ENCODE measurements at regions of chr15 and their contacts with region 1.

Region 1: GRCh38 chr15:64010719-64011118 is 35.6 kb downstream of the DAPK2 start:
- DNase-seq: peak; percentile 61
- ATAC-seq: peak; percentile 97
- H3K4me3 Mint-ChIP-seq: peak overlapping the region; percentile 69
- H3K27ac Mint-ChIP-seq: peak overlapping the region; percentile 89
- H3K4me1 Mint-ChIP-seq: peaks cover 32% of the 10 kb centered on the region
- H3K27me3 Mint-ChIP-seq: no peaks in the 10 kb centered on the region
- CTCF ChIP-seq: no peak

Region 2: DNA sequence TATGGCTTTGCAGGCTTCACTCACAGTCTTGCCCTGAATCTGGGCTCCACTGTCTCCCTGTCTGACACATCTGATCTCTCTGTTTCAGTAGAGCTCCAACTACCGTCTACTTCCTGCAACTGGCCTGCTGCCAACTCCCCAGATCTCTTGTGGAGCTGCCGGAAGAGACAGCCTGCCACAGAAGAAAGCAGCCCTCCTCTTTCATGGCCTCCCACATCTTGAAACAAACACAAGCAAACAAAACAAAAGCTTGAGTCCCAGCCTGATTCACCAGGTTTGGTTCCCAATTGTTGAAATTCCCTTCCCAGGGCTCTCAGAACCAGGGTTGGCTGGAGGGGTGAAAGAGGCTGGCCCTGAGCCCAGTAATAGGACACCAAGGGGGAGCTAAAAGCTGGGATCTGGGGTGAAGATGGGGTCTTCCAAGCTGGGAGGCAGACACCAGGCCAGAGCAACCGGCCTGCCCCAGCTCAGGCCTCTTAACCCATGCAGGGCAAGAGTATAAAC is 573.8 kb before region 1 on chr15:
- CTCF ChIA-PET with region 1: no interaction called
- POLR2A ChIA-PET with region 1: no interaction called
- intact Hi-C with region 1: no loop called
- DNase-seq: no peak
- ATAC-seq: no peak
- H3K4me3 Mint-ChIP-seq: no peak overlapping the region
- H3K27ac Mint-ChIP-seq: no peak overlapping the region
- H3K4me1 Mint-ChIP-seq: peaks cover 2% of the 10 kb centered on the region
- H3K27me3 Mint-ChIP-seq: peaks cover 5% of the 10 kb centered on the region
- CTCF ChIP-seq: no peak

Region 3: DNA sequence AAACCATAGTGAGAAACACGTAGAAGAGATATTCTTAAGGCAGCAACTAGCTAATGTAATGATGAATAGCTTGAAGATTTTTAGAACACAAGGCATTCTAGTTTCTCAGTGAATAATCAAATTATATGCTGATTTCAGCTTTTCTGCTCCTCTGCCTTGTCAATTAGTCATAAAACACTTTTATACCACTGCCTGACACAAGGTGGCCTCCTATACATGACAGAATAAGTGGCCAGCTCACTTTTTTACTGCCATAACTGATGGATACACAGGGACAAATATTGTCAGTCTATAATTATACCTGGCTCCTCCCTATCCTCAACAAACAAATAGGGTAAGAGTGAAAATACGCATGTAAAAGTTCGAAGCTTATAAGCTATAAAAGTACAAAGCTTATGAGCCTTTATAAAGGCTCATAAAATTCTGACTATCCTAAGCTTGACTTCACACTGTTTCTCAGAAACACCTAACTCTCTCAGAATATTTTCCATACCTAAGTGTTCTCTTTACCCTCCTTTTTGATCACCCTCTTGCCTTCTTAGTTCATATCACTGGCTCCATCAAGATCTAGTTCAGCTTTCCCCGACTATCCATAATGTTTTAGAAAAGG is 258.5 kb before region 1 on chr15:
- CTCF ChIA-PET with region 1: interaction called, 59 read pairs
- POLR2A ChIA-PET with region 1: interaction called, 9 read pairs
- intact Hi-C with region 1: loop called (anchors 1 kb)
- DNase-seq: no peak
- ATAC-seq: peak; percentile 83
- H3K4me3 Mint-ChIP-seq: no peak overlapping the region
- H3K27ac Mint-ChIP-seq: peak overlapping the region; percentile 59
- H3K4me1 Mint-ChIP-seq: peaks cover 3% of the 10 kb centered on the region
- H3K27me3 Mint-ChIP-seq: no peaks in the 10 kb centered on the region
- CTCF ChIP-seq: no peak

Region 4: DNA sequence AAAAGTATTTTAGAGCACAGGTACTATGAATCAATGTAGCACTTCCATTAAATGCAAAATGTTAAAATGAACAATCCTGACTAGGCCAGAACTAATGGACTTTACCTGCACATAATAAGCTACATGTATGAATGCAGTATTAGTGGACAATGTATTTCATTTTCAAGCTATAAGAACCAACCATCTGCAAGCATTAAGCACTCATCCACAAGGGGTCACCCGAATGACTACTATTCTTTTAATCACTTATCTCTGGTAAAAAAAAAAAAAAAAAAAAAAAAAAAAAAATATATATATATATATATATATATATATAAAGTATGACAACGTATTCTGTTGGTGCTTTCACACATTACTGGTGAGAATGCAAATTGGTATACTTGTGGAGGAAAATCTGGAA is 184.2 kb before region 1 on chr15:
- CTCF ChIA-PET with region 1: interaction called, 13 read pairs
- POLR2A ChIA-PET with region 1: interaction called, 3 read pairs
- intact Hi-C with region 1: loop called (anchors 2 kb)
- DNase-seq: no peak
- ATAC-seq: peak; percentile 49
- H3K4me3 Mint-ChIP-seq: no peak overlapping the region
- H3K27ac Mint-ChIP-seq: no peak overlapping the region
- H3K4me1 Mint-ChIP-seq: peaks cover 63% of the 10 kb centered on the region
- H3K27me3 Mint-ChIP-seq: no peaks in the 10 kb centered on the region
- CTCF ChIP-seq: no peak

Region 5: GRCh38 chr15:63909819-63910437 is 100.8 kb before region 1 on chr15:
- CTCF ChIA-PET with region 1: no interaction called
- POLR2A ChIA-PET with region 1: no interaction called
- intact Hi-C with region 1: no loop called
- DNase-seq: no peak
- ATAC-seq: no peak
- H3K4me3 Mint-ChIP-seq: no peak overlapping the region
- H3K27ac Mint-ChIP-seq: no peak overlapping the region
- H3K4me1 Mint-ChIP-seq: peaks cover 15% of the 10 kb centered on the region
- H3K27me3 Mint-ChIP-seq: no peaks in the 10 kb centered on the region
- CTCF ChIP-seq: no peak

Region 6: DNA sequence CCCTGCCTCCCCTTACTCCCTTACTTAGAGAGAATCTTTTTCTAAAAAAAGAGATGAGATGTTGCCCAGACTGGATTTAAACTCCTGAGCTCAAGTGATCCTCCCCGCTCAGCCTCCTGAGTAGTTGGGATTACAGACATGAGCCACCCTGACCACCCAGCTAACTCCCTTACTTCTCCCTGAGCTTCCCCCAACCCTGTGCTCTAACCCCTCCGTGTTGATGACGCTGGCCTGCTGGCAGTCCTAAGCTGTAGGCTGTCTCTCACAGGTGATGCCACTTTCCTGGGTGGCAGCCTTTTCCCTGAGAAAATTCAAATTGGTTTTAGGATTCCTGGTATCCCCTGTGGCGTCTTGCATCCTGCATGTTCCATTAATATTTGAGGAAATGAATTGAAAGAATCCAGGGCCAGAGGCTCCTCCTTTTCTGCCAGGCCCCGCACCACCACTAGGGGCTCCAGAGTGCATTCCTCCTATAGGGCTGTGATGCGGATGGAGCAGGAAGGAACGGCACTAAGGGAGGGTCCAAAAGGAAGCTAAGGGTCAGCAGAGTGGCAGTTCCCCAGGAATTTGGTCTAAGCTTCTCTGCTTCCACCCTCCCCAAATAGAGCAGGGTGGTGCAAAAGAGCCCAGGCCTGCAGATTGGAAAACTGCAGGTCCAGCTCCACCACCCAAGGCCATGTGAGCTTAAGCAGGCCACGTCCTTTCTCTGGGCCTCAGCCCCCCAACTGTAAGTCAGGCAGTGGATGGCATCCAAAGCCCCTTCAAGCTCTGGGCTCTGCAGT is 65.5 kb before region 1 on chr15:
- CTCF ChIA-PET with region 1: interaction called, 20 read pairs
- POLR2A ChIA-PET with region 1: no interaction called
- intact Hi-C with region 1: loop called (anchors 1 kb)
- DNase-seq: peak; percentile 52
- ATAC-seq: peak; percentile 89
- H3K4me3 Mint-ChIP-seq: no peak overlapping the region
- H3K27ac Mint-ChIP-seq: no peak overlapping the region
- H3K4me1 Mint-ChIP-seq: peaks cover 31% of the 10 kb centered on the region
- H3K27me3 Mint-ChIP-seq: no peaks in the 10 kb centered on the region
- CTCF ChIP-seq: peak; percentile 70

Region 7: DNA sequence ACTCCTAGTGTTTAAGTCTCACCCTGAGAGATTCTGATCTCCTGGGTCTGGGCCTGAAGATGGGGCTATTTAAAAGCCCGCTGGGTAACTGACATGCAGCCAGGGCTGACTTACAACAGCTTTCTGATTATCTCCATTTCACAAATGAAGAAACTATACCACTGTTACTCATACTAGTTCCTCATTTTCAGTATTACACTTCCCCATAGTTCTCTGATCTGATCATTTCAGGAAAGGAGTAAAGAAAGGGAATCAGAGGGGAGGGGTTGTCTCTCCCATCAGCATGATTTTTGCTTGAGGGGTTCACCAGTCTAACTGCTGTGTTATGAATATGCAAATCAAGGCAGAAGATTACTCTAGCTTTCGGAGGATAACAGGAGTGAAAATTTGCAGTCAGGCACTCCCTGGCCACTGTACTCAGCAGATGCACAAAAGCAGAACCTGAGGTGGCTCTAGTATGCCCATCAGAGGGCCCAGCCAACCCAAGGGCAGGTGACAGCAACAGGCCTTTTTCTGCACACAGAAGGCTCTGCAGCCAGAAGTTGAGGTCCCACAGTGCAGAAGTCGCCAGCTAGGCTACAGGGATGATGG is 23.9 kb before region 1 on chr15:
- CTCF ChIA-PET with region 1: interaction called, 16 read pairs
- POLR2A ChIA-PET with region 1: interaction called, 25 read pairs
- intact Hi-C with region 1: loop called (anchors 1 kb)
- DNase-seq: no peak
- ATAC-seq: peak; percentile 82
- H3K4me3 Mint-ChIP-seq: peak overlapping the region; percentile 61
- H3K27ac Mint-ChIP-seq: peak overlapping the region; percentile 86
- H3K4me1 Mint-ChIP-seq: peaks cover 60% of the 10 kb centered on the region
- H3K27me3 Mint-ChIP-seq: no peaks in the 10 kb centered on the region
- CTCF ChIP-seq: no peak

Region 8: DNA sequence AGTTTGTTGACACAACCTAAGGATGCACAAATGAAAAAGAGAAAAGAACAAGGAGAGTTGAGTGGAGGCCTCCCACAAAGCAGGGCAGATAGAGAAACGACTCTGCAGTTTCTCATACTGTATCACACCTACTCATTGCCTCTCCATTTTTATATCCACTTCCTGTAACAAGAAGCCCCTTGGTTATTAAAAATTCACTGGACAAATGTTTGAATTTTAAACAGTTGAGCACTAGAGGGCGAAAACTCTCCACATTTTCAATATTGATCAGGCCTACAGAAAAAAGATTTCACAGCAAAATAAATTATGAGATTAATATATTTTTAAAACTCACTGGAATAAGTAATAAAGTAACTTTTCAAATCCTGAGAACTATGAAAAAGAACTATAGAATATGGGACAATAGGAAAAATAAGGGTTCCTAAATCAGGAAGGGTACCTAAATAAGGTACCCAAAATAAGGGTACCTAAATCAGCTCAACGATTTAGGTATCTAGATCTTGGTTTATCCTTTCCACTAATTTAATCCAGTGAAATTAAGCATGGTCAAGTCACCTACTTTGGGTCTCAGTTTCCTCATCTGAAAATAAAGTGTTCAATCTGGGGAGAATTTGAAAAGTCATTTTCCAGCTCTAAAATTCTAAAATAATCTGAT is 199.1 kb after region 1 on chr15:
- CTCF ChIA-PET with region 1: no interaction called
- POLR2A ChIA-PET with region 1: no interaction called
- intact Hi-C with region 1: no loop called
- DNase-seq: no peak
- ATAC-seq: peak; percentile 10
- H3K4me3 Mint-ChIP-seq: no peak overlapping the region
- H3K27ac Mint-ChIP-seq: no peak overlapping the region
- H3K4me1 Mint-ChIP-seq: no peaks in the 10 kb centered on the region
- H3K27me3 Mint-ChIP-seq: no peaks in the 10 kb centered on the region
- CTCF ChIP-seq: no peak